Transverse colon (tissue), 4 donors: ENCODE measurements at regions of chr3 and their contacts with region 1.

Region 1: DNA sequence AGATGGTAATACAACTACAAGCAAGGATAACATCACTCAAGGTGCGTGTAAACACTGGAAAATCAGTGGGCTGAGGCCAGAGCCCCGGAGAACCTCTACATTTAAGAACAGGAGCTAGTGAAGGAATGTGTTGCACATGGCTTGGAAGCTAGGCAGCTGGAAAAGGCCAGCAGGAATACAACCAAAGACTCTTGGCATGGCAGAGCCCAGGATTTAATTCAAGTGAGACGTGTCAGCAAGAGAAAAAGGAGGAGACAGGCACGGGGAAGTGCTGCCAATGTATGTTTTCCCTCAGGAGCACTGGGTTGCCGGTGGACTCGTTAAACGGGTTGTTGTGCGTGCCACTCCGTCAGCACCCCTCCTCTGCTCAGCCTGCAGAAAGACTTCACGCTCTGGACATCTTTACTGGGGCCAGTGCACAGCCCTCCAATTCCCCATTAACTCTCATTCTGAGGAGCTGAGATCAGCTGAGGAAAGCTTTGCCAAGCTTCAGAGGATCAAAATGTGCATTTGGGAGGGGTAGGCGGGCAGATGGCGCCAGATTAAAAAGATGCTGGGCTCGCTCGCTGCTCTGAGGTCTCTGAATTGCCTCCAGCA is 103.8 kb downstream of the PDZRN3 start:
- DNase-seq: peak; percentile 63
- H3K4me3 ChIP-seq: peak overlapping the region in 2 of 4 donors; percentile 13 to 30
- H3K27ac ChIP-seq: peak overlapping the region; percentile 77 to 86 (median 84)
- H3K4me1 ChIP-seq: peaks cover 20 to 65% (median 45%) of the 10 kb centered on the region in 4 donors
- H3K27me3 ChIP-seq: no peaks in the 10 kb centered on the region
- CTCF ChIP-seq: no peak
- EP300 ChIP-seq: peak; percentile 89
- POLR2A ChIP-seq: no peak

Region 2: DNA sequence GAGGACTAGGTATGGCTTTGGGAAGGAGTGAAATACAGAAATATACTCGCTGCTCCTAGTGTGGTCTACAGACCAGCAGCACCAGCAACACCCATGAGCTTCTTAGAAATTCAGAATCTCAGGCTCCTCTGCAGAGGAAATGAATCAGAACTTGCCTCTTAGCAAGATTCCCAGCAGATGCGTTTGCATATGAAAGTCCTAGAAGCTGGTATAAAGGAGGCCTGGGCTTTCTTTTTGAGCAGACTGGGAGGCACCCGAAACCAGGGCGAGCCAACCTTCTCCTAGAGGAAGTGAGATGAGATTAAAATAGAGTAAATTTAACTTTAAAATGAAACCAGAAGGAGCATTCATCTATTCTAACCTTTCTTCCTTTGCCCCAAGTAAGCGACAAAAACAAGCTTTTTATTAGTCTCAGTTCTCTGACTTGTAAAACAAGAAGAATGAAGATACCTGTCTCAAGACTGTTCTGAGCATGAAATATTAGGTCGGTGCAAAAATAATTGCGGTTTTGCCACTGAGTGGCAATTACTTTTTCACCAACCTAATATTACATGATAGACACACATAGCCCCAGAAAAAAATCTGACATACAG is 36.2 kb before region 1 on chr3:
- in situ Hi-C with region 1: no loop called
- intact Hi-C with region 1: no loop called
- DNase-seq: no peak
- H3K4me3 ChIP-seq: no peak overlapping the region
- H3K27ac ChIP-seq: no peak overlapping the region
- H3K4me1 ChIP-seq: peaks cover 0 to 25% (median 10%) of the 10 kb centered on the region in 4 donors
- H3K27me3 ChIP-seq: no peaks in the 10 kb centered on the region
- CTCF ChIP-seq: no peak
- EP300 ChIP-seq: no peak
- POLR2A ChIP-seq: no peak

Region 3: DNA sequence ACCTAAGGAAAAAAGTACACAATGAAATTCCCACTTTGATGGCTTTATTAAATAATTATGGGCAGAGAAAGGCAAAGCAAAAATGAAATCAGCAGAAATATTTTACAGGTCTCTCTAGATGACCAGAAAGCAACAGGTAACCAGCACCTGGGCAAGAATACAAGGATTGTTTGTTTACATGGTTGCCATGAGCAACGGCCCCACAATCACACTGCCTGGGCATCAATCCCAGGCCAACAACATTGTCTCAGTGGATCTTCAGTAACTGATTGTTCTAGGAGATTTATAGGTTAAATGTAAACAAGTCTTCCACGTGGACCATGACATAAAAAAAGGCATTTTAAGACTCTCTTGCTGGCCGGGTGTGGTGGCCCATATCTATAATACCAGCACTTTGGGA is 21.2 kb after region 1 on chr3:
- in situ Hi-C with region 1: no loop called
- intact Hi-C with region 1: no loop called
- DNase-seq: peak; percentile 50
- H3K4me3 ChIP-seq: no peak overlapping the region
- H3K27ac ChIP-seq: peak overlapping the region in 3 of 4 donors; percentile 32 to 52 (median 39)
- H3K4me1 ChIP-seq: peaks cover 0 to 49% (median 10%) of the 10 kb centered on the region in 4 donors
- H3K27me3 ChIP-seq: no peaks in the 10 kb centered on the region
- CTCF ChIP-seq: no peak
- EP300 ChIP-seq: no peak
- POLR2A ChIP-seq: no peak

Region 4: DNA sequence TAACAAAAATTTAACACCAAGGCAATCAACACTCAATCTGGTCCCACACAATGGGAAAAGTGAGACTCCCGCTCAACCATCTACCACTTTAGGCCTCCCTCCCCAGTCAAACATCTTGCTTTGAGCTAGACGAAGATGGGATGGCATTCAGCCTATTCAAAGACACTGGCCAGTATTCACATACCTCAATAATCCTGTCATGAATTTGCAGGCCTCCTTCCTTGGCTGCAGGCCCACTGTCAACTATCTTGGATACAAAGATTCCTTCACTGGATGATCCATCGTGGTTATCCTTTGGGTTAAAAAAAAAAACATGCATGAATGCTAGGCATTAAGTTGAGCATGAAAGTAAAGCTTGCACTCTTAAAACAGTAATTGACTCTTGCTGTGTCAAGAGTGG is 81.2 kb after region 1 on chr3:
- in situ Hi-C with region 1: loop called in 1 of 4 experiments (anchors 25 kb)
- intact Hi-C with region 1: loop called (anchors 5 kb)
- DNase-seq: no peak
- H3K4me3 ChIP-seq: no peak overlapping the region
- H3K27ac ChIP-seq: peak overlapping the region; percentile 39 to 75 (median 66)
- H3K4me1 ChIP-seq: peaks cover 0 to 46% (median 18%) of the 10 kb centered on the region in 4 donors
- H3K27me3 ChIP-seq: no peaks in the 10 kb centered on the region
- CTCF ChIP-seq: no peak
- EP300 ChIP-seq: no peak
- POLR2A ChIP-seq: no peak